Activated T-helper 2 cell treated with anti-CD3 and anti-CD28 coated beads, Interferon-gamma antibody, Interleukin-2, Interleukin-4, amounts not matched to agents 10 μg/mL and 5 μg/mL and 100 μg/mL, durations not matched to agents 14 hours and 24 hours and 36 hours (primary cell): ENCODE measurements at regions of chr3 and their contacts with region 1.

Region 1: DNA sequence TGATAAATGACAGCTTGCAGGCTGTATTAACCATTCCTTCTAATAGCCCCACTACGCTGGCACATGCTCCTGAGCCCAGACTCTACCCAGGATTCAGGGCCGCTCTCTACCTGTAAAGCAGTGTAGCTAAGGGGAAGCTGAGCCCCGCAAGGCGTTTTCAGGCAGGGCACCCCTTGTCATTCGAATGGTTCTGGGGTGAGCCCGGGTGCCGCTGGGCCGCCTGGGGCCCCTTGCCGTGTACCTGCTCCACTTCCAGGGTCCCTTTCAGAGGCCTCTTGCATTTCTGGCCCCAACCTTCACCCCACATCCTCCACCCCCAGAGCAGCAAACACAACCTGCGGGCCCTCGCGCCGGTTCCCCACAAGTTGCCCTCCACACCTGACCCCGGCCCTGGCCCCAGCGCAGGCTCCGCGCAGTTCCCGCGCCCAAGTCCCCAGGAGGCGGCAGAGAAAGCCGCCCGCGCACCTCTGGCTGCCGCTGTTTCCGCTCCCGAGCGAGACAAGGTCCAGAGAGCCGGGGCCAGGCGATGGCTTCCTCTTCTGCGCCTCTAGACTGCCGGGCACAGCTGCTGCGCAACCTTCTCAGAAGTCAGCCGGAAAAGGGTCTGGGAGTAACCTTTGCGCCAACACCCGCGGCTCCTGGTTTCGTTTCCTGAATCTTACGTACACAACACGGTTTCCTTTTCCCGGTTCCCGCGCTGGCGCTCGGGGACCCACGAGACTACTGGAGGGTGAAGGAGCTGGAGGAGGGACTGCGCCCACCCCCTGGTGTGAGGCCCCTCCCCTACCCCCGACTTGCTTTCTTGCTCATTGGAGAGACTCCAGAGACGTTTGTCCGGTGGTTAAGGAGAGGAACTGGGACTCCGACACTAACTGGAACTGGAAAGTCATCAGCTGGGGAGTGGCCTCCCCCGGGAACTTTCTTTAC is at the start of gene PLSCR1:
- DNase-seq: peak; percentile 75
- H3K4me3 Mint-ChIP-seq: peak within 1 kb of the TSS; percentile 87
- H3K27ac Mint-ChIP-seq: peak within 1 kb of the TSS; percentile 86
- H3K4me1 Mint-ChIP-seq: peaks cover 65% of the 10 kb centered on the region
- H3K27me3 Mint-ChIP-seq: no peaks in the 10 kb centered on the region
- total RNA-seq, gene PLSCR1: 54.0 and 65.1 TPM in 2 replicates

Region 2: DNA sequence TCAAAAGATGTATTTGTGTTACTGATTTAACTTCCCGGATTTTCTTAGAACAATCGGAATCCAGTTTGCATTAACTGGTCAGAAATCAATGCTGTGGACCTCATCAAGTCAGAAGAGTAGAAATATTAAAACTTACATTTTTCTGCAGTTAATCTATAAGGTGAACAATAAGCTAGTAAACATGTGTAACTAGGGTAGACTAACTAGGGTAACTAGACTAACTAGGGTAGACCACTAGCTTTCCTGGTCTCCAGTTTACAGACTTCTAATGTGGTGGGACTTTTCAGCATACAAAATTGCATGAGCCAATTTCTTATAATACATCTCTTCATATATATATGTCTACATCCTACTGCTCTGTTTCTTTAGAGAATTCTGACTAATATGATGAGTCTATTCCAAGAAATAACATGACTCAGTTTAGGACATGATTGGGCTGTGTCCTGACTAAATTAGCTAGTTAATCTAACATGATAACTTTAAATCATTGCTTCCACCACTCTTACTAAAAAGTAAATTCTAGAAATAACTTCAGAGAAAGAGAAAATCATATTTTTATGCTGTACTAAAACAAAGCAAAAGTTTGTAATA is 80.2 kb before region 1 on chr3:
- intact Hi-C with region 1: loop called (anchors 2 kb)
- DNase-seq: no peak
- H3K4me3 Mint-ChIP-seq: no peak overlapping the region
- H3K27ac Mint-ChIP-seq: no peak overlapping the region
- H3K4me1 Mint-ChIP-seq: peaks cover 25% of the 10 kb centered on the region
- H3K27me3 Mint-ChIP-seq: no peaks in the 10 kb centered on the region

Region 3: DNA sequence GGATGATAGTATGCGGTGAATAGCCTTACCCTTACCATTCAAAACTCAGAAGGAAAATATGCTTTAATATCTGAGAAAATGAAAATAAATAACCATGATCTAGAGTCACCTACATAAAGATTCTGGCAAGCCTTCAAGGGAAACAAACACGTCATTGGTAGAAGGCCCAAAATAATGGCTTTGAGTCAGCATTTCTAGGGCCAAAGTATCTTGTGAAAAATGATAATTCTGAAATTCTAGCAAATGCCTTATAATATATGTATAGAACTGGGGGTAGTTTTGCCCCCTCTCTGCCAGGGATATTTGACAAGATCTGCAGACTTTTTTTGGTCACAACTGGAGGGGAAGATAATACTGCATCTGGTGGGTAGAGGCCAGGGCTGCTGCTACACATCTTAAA is 15.2 kb before region 1 on chr3:
- intact Hi-C with region 1: no loop called
- DNase-seq: no peak
- H3K4me3 Mint-ChIP-seq: no peak overlapping the region
- H3K27ac Mint-ChIP-seq: no peak overlapping the region
- H3K4me1 Mint-ChIP-seq: peaks cover 3% of the 10 kb centered on the region
- H3K27me3 Mint-ChIP-seq: no peaks in the 10 kb centered on the region

Region 4: GRCh38 chr3:146589899-146590508 is 45.7 kb after region 1 on chr3:
- intact Hi-C with region 1: no loop called
- DNase-seq: no peak
- H3K4me3 Mint-ChIP-seq: no peak overlapping the region
- H3K27ac Mint-ChIP-seq: no peak overlapping the region
- H3K4me1 Mint-ChIP-seq: no peaks in the 10 kb centered on the region
- H3K27me3 Mint-ChIP-seq: peaks cover 17% of the 10 kb centered on the region